ENCODE measurements at regions of chr4 and their contacts with region 1.

Region 1: DNA sequence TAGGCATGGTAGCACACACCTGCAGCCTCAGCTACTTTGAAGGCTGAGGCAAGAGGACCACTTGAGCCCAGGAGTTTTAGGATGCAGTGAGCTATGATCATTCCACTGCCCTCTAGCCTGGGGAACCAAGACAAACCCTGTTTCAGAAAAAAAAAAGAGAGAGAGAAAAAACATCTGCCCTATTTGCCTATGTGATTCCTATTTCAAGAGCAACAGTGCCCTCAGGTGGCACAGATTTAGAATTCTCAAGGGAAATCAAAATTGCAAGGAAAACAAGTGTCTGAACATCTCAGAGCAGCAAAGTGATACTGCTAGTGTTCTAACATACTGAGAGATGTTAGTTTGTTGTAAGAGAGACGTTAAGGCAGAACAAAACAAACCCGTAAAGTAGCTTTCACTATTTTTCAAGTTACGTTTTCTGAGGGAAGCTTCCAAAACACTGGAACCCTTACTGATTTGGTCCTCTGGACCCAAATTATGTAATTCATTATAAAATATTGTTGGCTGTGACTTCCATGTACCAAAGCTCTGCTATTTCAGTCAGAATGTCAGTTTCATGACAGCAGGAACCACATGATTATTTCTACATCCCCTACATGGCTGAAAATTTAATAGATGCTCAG is 7.9 kb downstream of the BDH2 start:
- DNase-seq: peak; percentile 32
- H3K4me3 ChIP-seq: no peak overlapping the region
- H3K27ac ChIP-seq: no peak overlapping the region
- H3K27me3 ChIP-seq: no peaks in the 10 kb centered on the region
- CTCF ChIP-seq: peak; percentile 73

Region 2: DNA sequence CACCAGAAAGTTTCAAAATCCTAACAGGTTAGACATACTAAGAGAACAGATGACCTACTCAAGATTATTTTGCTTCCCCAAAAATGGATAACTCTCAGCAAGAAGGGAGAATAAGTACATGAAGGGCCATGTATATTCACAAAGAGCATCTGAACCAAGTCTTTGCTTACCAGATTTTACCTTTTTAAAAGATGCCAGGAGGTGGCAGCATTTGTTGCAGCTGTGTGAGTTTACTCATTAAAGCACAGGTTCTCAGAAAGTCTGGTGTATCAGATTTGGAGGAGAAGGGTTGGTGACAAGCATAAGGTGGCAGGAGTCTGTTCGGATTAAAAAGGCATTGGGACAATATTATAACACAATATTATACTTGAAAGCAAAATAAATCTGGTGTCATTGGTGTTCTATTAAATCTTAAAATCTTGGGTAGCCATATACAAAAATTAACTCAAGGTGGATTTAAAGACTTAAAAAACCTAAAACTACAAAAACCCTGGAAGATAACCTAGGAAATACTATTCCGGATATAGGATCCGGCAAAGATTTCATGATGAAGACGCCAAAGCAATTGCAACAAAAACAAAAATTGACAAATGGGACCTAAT is 641.9 kb before region 1 on chr4:
- CTCF ChIA-PET with region 1: interaction called, 10 read pairs
- POLR2A ChIA-PET with region 1: no interaction called
- DNase-seq: peak; percentile 32
- H3K4me3 ChIP-seq: no peak overlapping the region
- H3K27ac ChIP-seq: no peak overlapping the region
- H3K27me3 ChIP-seq: peaks cover 2% of the 10 kb centered on the region
- CTCF ChIP-seq: peak; percentile 69

Region 3: GRCh38 chr4:102620697-102621497 is 470.8 kb before region 1 on chr4:
- CTCF ChIA-PET with region 1: interaction called, 41 read pairs
- POLR2A ChIA-PET with region 1: no interaction called
- DNase-seq: peak; percentile 38
- H3K4me3 ChIP-seq: peak overlapping the region; percentile 3; the same call in 1 of the 2 replicates
- H3K27ac ChIP-seq: no peak overlapping the region
- H3K27me3 ChIP-seq: no peaks in the 10 kb centered on the region
- CTCF ChIP-seq: peak; percentile 71

Region 4: GRCh38 chr4:103008875-103009729 is 82.6 kb before region 1 on chr4:
- CTCF ChIA-PET with region 1: interaction called, 20 read pairs
- POLR2A ChIA-PET with region 1: no interaction called
- DNase-seq: peak; percentile 50
- H3K4me3 ChIP-seq: no peak overlapping the region
- H3K27ac ChIP-seq: no peak overlapping the region
- H3K27me3 ChIP-seq: no peaks in the 10 kb centered on the region
- CTCF ChIP-seq: peak; percentile 83

Region 5: DNA sequence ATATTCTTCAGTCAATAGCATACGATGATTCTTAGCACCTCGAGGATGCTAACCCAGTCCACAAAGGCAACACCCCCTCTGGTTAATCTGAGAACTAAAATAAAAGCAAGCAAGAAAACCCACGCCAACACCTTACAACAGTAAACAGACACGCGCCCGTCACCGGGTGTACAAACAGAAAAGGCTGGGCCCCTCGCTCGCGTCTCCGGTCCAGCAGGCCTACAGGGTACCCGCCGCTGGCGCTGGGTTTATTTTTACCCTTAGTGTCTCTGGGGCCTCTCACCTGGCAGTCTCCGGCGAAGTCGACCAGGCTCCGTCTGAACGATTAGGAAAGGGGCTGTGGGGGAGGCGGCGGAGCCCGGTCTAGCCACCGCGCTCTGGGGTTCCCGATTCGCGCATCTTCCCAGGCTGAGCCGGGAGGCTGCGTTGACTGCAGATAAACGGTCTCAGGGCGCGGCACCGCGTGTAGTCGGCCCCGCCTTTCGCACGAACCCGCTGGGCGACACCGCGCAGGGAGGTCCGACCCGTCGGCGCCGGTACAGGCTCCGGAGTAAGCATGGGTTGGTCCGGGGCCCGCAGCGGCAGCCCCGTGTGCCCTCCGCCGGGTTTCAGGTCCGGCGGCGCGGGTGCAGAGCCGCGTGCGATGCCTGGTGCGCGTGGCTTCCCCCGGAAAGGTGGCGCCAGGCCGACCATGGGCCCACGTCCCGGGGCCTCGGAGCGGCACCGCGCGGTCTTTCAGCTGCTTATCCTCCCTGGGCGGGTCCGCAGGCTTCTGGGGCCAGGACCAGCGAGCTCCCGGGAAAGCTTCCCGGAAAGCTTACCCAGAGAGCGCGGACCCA is 15.6 kb before region 1 on chr4:
- CTCF ChIA-PET with region 1: interaction called, 72 read pairs
- POLR2A ChIA-PET with region 1: interaction called, 4 read pairs
- DNase-seq: no peak
- H3K4me3 ChIP-seq: peak overlapping the region; percentile 70
- H3K27ac ChIP-seq: peak overlapping the region; percentile 74
- H3K27me3 ChIP-seq: no peaks in the 10 kb centered on the region
- CTCF ChIP-seq: no peak

Region 6: DNA sequence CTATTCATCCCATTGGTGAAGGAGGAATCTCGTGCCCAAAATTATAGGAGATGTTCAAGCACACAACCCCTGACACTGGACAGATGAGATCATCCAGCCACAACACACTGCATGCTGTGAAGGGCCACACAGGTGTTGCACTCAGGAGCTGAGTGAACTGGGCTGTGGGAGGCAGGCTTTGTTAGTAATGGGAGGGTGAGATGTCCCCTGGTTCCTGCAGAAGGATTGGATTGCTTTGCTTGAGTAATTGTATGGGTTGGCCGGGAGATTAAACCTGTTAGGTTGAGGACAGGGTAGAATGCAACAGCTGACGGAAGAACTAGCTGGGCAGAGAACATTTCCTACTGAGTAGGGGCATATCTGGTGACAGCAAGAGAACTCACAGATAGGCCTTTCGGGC is 475.9 kb after region 1 on chr4:
- CTCF ChIA-PET with region 1: no interaction called
- POLR2A ChIA-PET with region 1: no interaction called
- DNase-seq: no peak
- H3K4me3 ChIP-seq: no peak overlapping the region
- H3K27ac ChIP-seq: no peak overlapping the region
- H3K27me3 ChIP-seq: no peaks in the 10 kb centered on the region
- CTCF ChIP-seq: no peak